ENCODE measurements at regions of chr11 and their contacts with region 1.

Region 1: GRCh38 chr11:78564490-78565467 is 9.9 kb downstream of the NARS2 start:
- DNase-seq: peak in 9 of 14 experiments; percentile 3 to 79 (median 15)
- ATAC-seq: peak; percentile 73
- H3K4me3 ChIP-seq: no peak overlapping the region
- H3K4me3 Mint-ChIP-seq: no peak overlapping the region
- H3K27ac ChIP-seq: no peak overlapping the region
- H3K27ac Mint-ChIP-seq: peak overlapping the region; percentile 38
- H3K4me1 ChIP-seq: peaks cover 13% of the 10 kb centered on the region
- H3K4me1 Mint-ChIP-seq: peaks cover 43% of the 10 kb centered on the region
- H3K27me3 ChIP-seq: no peaks in the 10 kb centered on the region
- H3K27me3 Mint-ChIP-seq: no peaks in the 10 kb centered on the region
- CTCF ChIP-seq: peak; percentile 87

Region 2: GRCh38 chr11:78000193-78000592 is 564.6 kb before region 1 on chr11:
- CTCF ChIA-PET with region 1: interaction called, 3 read pairs
- POLR2A ChIA-PET with region 1: no interaction called
- intact Hi-C with region 1: loop called in 1 of 2 experiments (anchors 5 kb)
- DNase-seq: peak in 12 of 14 experiments; percentile 10 to 74 (median 26)
- ATAC-seq: peak; percentile 77
- H3K4me3 ChIP-seq: no peak overlapping the region
- H3K4me3 Mint-ChIP-seq: no peak overlapping the region
- H3K27ac ChIP-seq: no peak overlapping the region
- H3K27ac Mint-ChIP-seq: no peak overlapping the region
- H3K4me1 ChIP-seq: peaks cover 9% of the 10 kb centered on the region
- H3K4me1 Mint-ChIP-seq: peaks cover 2% of the 10 kb centered on the region
- H3K27me3 ChIP-seq: no peaks in the 10 kb centered on the region
- H3K27me3 Mint-ChIP-seq: no peaks in the 10 kb centered on the region
- CTCF ChIP-seq: peak; percentile 63

Region 3: DNA sequence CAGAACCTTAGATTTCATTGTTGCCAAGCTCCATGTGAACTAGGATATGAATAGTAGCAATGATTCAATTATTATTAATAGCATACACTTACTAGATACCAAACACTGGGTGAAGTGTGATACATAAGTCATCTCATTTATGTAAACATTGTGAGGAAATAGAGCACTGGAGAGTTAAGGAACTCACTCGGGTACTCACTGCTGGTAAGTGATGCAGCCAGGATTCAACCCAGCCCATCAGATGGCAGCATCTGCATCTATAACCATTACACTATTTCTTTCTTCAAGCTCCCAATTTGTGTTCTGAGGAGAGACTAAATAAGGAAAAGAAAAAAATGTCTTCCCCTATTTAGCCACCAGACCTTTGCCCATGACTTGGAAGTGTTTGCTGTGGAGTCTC is 415.1 kb before region 1 on chr11:
- CTCF ChIA-PET with region 1: interaction called, 8 read pairs
- POLR2A ChIA-PET with region 1: no interaction called
- intact Hi-C with region 1: loop called in 1 of 2 experiments (anchors 5 kb)
- DNase-seq: peak in 4 of 14 experiments; percentile 15 to 51 (median 48)
- ATAC-seq: peak; percentile 60
- H3K4me3 ChIP-seq: no peak overlapping the region
- H3K4me3 Mint-ChIP-seq: no peak overlapping the region
- H3K27ac ChIP-seq: no peak overlapping the region
- H3K27ac Mint-ChIP-seq: no peak overlapping the region
- H3K4me1 ChIP-seq: no peaks in the 10 kb centered on the region
- H3K4me1 Mint-ChIP-seq: no peaks in the 10 kb centered on the region
- H3K27me3 ChIP-seq: no peaks in the 10 kb centered on the region
- H3K27me3 Mint-ChIP-seq: no peaks in the 10 kb centered on the region
- CTCF ChIP-seq: no peak

Region 4: DNA sequence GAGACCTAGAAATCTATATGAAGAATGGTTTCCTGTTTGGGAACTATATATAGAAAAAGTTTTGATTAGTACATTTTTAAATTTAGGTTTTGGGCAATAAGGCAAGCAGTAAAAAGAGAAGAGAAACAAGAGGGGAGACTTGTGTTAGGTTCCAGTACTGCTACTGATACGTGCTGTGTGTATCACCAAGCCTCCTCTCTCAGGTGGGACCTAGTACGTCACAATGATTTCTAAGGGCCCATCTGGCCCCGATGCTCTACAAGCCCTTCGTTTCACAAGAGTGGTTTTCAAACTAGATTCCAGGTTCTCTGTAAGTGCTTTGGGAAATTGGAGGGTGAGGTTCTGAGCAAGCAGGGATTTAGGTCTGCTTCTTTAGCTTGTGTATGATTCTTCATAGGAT is 336.9 kb before region 1 on chr11:
- CTCF ChIA-PET with region 1: interaction called, 6 read pairs
- POLR2A ChIA-PET with region 1: no interaction called
- intact Hi-C with region 1: loop called in 1 of 2 experiments (anchors 2 kb)
- DNase-seq: no peak
- ATAC-seq: no peak
- H3K4me3 ChIP-seq: no peak overlapping the region
- H3K4me3 Mint-ChIP-seq: no peak overlapping the region
- H3K27ac ChIP-seq: no peak overlapping the region
- H3K27ac Mint-ChIP-seq: no peak overlapping the region
- H3K4me1 ChIP-seq: peaks cover 3% of the 10 kb centered on the region
- H3K4me1 Mint-ChIP-seq: peaks cover 15% of the 10 kb centered on the region
- H3K27me3 ChIP-seq: no peaks in the 10 kb centered on the region
- H3K27me3 Mint-ChIP-seq: no peaks in the 10 kb centered on the region
- CTCF ChIP-seq: no peak

Region 5: DNA sequence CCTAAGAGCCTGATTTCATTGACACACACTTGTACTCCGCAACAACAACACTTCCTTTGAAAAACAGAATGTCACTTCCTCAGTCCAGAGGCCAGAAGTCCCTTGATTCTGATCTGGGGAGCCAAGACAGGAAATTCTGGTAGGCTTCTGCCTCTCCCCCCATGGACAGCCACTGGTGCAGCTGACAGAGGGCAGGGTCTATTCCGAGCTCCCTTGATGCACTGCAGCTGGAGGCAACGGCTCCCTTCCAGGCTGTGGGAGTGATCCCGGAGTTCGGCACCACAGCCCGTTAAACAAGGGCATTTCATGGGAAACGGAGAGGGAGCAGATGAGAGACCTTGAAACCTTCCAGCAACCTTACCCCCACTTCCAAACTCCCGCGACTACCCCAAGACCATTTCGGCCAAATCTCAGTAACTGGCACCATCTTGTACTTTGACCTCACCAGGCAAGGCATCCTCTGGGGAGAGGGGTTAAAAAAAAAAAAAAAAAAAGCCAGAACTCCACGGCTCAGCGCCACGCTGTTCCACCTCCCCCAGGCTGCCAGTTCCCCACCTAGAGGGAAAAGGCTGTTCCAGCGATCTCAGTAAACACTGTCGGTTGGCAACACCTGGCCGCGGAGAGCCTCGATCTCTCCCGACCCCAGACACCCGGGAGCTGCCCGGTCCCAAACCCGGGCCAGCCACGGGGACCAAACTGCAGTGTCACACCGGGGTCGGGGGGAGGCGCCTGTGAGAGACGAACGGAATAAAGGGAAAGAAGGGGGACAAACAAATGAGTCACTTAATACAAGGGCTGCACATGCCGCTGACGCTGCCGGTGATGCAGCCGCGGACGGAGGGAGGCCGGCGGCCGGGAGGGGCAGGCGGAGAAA is 148.2 kb before region 1 on chr11:
- CTCF ChIA-PET with region 1: interaction called, 15 read pairs
- POLR2A ChIA-PET with region 1: interaction called, 17 read pairs
- intact Hi-C with region 1: loop called (anchors 1 to 2 kb)
- DNase-seq: peak; percentile 57 to 86 (median 74)
- ATAC-seq: peak; percentile 70
- H3K4me3 ChIP-seq: peak overlapping the region; percentile 59
- H3K4me3 Mint-ChIP-seq: peak overlapping the region; percentile 88
- H3K27ac ChIP-seq: peak overlapping the region in 1 of 2 donors; percentile 4
- H3K27ac Mint-ChIP-seq: peak overlapping the region; percentile 84
- H3K4me1 ChIP-seq: peaks cover 33% of the 10 kb centered on the region
- H3K4me1 Mint-ChIP-seq: peaks cover 22% of the 10 kb centered on the region
- H3K27me3 ChIP-seq: peaks cover 0 to 5% of the 10 kb centered on the region in 2 experiments
- H3K27me3 Mint-ChIP-seq: peaks cover 28% of the 10 kb centered on the region
- CTCF ChIP-seq: peak; percentile 73

Region 6: DNA sequence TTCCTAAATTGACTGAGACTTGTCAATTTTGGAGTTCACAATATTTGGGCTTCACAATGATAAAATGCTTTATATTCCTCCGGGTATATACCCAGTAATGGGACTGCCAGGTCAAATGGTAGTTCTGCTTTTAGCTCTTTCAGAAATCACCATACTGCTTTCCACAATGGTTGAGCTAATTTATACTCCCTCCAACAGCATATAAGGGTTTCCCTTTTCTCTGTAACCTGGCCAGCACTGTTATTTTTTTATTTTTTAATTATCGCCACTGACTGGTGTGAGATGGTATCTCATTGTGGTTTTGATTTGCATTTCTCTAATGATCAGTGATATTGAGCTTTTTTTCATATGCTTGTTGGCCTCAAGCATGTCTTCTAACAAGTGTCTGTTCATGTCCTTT is 11.9 kb before region 1 on chr11:
- CTCF ChIA-PET with region 1: interaction called, 11 read pairs
- POLR2A ChIA-PET with region 1: no interaction called
- intact Hi-C with region 1: no loop called
- DNase-seq: no peak
- ATAC-seq: no peak
- H3K4me3 ChIP-seq: no peak overlapping the region
- H3K4me3 Mint-ChIP-seq: no peak overlapping the region
- H3K27ac ChIP-seq: no peak overlapping the region
- H3K27ac Mint-ChIP-seq: no peak overlapping the region
- H3K4me1 ChIP-seq: no peaks in the 10 kb centered on the region
- H3K4me1 Mint-ChIP-seq: peaks cover 10% of the 10 kb centered on the region
- H3K27me3 ChIP-seq: no peaks in the 10 kb centered on the region
- H3K27me3 Mint-ChIP-seq: no peaks in the 10 kb centered on the region
- CTCF ChIP-seq: no peak